Activated CD8-positive, alpha-beta T cell treated with anti-CD3 and anti-CD28 coated beads, Interleukin-2, amount 10 ng/mL, durations not matched to agents 7 days and 5 days (primary cell): ENCODE measurements at regions of chr12 and their contacts with region 1.

Region 1: DNA sequence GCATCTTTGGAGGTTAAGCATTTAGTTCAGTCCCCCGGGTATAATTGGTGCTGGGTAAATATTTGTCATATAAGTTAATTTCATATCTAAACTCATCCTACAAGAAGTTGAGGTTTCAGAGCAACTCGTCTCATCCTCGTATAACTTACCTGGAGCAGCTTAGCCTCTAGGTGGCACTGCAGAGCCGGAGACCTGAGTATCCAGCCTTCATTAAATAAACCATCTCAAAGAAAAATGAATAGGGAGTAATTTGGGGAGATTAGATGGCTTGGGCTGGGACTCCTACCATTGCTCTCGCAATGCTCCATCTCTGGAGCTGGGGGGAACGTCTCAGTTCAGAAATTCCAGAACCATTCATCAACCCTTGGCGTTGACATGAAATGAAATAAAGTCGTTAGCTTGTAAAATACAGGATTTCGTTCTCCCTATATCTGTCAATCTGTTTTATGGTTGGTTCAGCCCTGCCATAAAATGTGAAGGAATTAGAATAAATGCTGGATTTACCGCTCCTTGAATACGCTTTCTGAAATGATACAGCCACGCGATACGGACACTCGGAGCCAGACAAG is 122.9 kb upstream of the TMEM132D start:
- DNase-seq: peak; percentile 53
- ATAC-seq: no peak
- H3K4me3 Mint-ChIP-seq: no peak overlapping the region
- H3K27ac Mint-ChIP-seq: no peak overlapping the region
- H3K4me1 Mint-ChIP-seq: no peaks in the 10 kb centered on the region
- H3K27me3 Mint-ChIP-seq: no peaks in the 10 kb centered on the region

Region 2: DNA sequence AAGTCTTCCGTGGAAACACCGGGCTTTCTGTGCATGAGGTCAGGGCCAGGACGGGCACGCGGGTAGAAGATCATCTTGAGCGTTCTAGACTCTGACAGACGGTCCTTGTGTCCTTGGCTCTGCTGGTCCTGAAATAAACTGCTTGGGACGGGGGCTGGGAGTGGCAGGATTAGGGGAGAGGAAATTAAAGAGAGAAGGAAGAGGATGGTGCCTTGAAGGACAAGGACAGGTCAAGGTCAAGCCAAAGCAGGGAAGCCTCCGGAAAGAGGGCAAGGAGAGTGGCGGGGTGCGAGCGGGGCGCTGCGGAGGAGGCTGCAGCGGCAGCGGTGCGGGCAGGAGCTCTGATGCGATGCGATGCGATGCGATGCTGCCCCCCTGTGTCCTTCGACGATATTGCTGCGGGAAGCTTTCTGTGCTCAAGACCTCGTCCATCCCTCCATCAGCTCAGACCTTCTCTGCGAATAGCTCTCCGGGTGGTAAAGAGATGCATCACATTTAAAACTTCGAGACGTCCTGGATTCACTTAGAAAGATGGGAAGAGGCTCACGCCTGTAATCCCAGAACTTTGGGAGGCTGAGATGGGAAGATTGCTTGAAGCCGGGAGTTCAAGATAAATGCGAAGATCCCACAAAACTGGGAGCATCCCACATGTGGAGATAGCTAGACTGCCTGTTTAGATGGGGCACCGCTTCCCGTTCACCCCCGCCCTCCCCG is 12.8 kb before region 1 on chr12:
- CTCF ChIA-PET with region 1: interaction called, 21 read pairs
- POLR2A ChIA-PET with region 1: no interaction called
- DNase-seq: peak; percentile 68
- ATAC-seq: peak; percentile 85
- H3K4me3 Mint-ChIP-seq: no peak overlapping the region
- H3K27ac Mint-ChIP-seq: no peak overlapping the region
- H3K4me1 Mint-ChIP-seq: no peaks in the 10 kb centered on the region
- H3K27me3 Mint-ChIP-seq: no peaks in the 10 kb centered on the region

Region 3: GRCh38 chr12:130070126-130070611 is 43.5 kb after region 1 on chr12:
- CTCF ChIA-PET with region 1: no interaction called
- POLR2A ChIA-PET with region 1: no interaction called
- DNase-seq: no peak
- ATAC-seq: no peak
- H3K4me3 Mint-ChIP-seq: no peak overlapping the region
- H3K27ac Mint-ChIP-seq: no peak overlapping the region
- H3K4me1 Mint-ChIP-seq: no peaks in the 10 kb centered on the region
- H3K27me3 Mint-ChIP-seq: no peaks in the 10 kb centered on the region